Mucosa of descending colon (tissue), 3 donors: ENCODE measurements at regions of chr7 and their contacts with region 1.

Region 1: GRCh38 chr7:131654668-131655326 is 98.4 kb upstream of the PODXL start:
- DNase-seq: peak; percentile 75 to 93 (median 90)
- ATAC-seq: peak; percentile 93
- H3K4me3 ChIP-seq: no peak overlapping the region
- H3K4me1 ChIP-seq: no peaks in the 10 kb centered on the region
- CTCF ChIP-seq: peak; percentile 82

Region 2: GRCh38 chr7:131507592-131508331 is 147.0 kb before region 1 on chr7:
- intact Hi-C with region 1: loop called (anchors 5 kb)
- DNase-seq: peak; percentile 80 to 93 (median 90)
- ATAC-seq: peak; percentile 92
- H3K4me3 ChIP-seq: no peak overlapping the region
- H3K4me1 ChIP-seq: no peaks in the 10 kb centered on the region
- CTCF ChIP-seq: peak; percentile 92

Region 3: DNA sequence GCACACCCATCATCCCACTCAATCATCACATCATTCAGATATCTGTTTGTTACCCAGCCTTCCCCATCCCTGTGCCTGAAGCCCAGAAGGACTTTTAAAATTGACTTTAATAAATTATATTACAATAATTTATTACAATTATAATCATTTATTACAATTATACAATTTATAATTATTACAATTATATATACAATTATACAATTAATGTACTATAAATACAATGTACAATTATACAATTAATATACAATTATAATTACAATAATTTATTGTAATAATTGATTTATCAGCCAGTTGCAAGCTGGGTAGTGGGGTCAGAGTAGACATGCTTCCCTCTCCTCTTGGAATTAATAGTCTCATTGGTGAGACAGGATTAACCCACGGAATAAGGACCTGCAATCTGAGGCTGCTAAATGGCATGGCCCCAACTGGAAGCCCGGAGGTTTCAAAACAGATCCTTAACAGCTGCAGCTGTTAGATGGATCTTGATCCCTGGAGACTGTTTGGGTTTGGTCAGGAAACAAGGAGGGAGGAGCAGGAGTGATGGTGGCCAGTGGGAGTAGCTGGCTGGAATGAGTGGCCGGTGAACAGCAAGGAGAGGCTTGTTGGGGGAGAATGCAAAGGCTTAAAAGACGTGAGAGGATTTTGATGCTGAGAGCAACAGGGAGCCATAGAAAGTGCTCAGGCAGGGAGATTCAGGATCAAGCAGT is 304.5 kb after region 1 on chr7:
- intact Hi-C with region 1: no loop called
- DNase-seq: no peak
- ATAC-seq: peak; percentile 25
- H3K4me3 ChIP-seq: no peak overlapping the region
- H3K4me1 ChIP-seq: no peaks in the 10 kb centered on the region
- CTCF ChIP-seq: no peak